ENCODE measurements at regions of chr11 and their contacts with region 1.

Region 1: GRCh38 chr11:71448257-71449171 is at the start of gene DHCR7:
- DNase-seq: peak; percentile 97
- H3K4me3 ChIP-seq: peak within 1 kb of the TSS; percentile 29 to 98 (median 61)
- H3K27ac ChIP-seq: peak within 1 kb of the TSS; percentile 21
- H3K4me1 ChIP-seq: peaks cover 31% of the 10 kb centered on the region
- H3K27me3 ChIP-seq: no peaks in the 10 kb centered on the region
- CTCF ChIP-seq: no peak
- POLR2A ChIP-seq: peak; percentile 65
- total RNA-seq, gene DHCR7: 166 and 171 TPM in 2 replicates

Region 2: DNA sequence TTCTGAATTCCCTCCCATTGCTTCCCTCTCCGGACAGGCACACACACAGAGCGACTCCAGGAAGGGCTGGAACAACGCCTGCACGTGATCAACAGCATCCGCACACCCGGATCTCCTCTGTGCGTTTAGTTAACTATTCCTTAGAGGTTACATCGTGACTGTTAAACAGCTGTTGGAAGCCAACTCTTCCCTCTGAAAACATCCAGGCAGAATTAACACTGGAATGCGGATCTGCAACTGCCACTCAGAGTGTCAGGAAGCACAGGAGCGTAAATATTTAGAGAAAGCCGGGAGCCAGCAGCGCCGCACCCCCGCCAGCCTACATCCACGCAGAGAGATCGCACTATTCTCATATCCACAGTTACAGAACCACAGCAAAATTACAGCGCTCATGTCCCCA is 242.3 kb before region 1 on chr11:
- CTCF ChIA-PET with region 1: no interaction called
- POLR2A ChIA-PET with region 1: no interaction called
- dilution Hi-C with region 1: no loop called
- intact Hi-C with region 1: no loop called
- DNase-seq: no peak
- H3K4me3 ChIP-seq: no peak overlapping the region
- H3K27ac ChIP-seq: no peak overlapping the region
- H3K4me1 ChIP-seq: no peaks in the 10 kb centered on the region
- H3K27me3 ChIP-seq: no peaks in the 10 kb centered on the region
- CTCF ChIP-seq: no peak
- POLR2A ChIP-seq: no peak

Region 3: GRCh38 chr11:71489311-71490048 is 41.0 kb after region 1 on chr11:
- CTCF ChIA-PET with region 1: interaction called, 5 read pairs
- POLR2A ChIA-PET with region 1: interaction called, 3 read pairs
- dilution Hi-C with region 1: no loop called
- intact Hi-C with region 1: loop called (anchors 2 kb)
- DNase-seq: peak; percentile 73
- H3K4me3 ChIP-seq: no peak overlapping the region
- H3K27ac ChIP-seq: peak overlapping the region; percentile 78
- H3K4me1 ChIP-seq: peaks cover 25% of the 10 kb centered on the region
- H3K27me3 ChIP-seq: no peaks in the 10 kb centered on the region
- CTCF ChIP-seq: no peak
- POLR2A ChIP-seq: peak; percentile 37

Region 4: GRCh38 chr11:71787098-71787823 is 338.7 kb after region 1 on chr11:
- CTCF ChIA-PET with region 1: no interaction called
- POLR2A ChIA-PET with region 1: no interaction called
- dilution Hi-C with region 1: no loop called
- intact Hi-C with region 1: loop called (anchors 10 kb)
- DNase-seq: peak; percentile 98
- H3K4me3 ChIP-seq: peak overlapping the region; percentile 27 to 67 (median 65)
- H3K27ac ChIP-seq: peak overlapping the region; percentile 73
- H3K4me1 ChIP-seq: peaks cover 3% of the 10 kb centered on the region
- H3K27me3 ChIP-seq: no peaks in the 10 kb centered on the region
- CTCF ChIP-seq: no peak
- POLR2A ChIP-seq: no peak

Measured in endothelial cell of umbilical vein (primary cell).